ENCODE measurements at regions of chr20 and their contacts with region 1.

Region 1: DNA sequence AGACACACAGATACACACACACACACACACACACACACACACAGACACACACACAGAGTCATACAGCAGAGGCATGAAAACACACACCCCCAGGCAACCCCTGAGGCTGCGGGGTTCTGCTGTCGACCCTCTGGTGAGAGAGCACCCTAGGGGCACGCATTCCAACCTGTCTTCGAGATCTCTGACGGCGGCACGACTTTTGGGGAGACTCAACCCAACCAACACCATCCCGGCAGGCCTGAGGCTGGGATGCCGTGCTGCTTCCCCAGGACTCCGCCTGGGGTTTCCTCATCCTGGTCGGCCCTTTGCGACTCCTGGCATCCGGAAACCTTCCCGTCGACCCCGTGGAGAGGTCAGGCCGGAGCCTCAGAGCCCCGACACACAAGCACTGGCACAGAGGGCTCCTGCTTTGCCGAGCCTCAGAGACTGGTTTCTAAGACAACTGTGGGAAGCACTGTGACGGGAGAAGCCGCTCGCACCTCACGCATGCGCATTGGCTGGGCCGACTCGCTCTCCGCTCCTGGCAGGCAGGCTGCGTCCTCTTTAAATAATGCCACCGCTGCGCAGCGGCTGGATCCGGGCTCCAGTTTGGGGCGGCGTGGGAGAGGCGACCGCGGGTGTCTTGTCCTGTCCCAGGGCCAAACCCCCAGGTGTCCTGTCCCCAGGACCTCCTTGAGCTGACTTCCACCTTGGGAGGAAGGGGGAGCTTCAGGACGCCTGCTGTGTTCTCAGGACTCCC is 168.9 kb upstream of the ZNF337 start:
- DNase-seq: peak; percentile 70
- CTCF ChIP-seq: no peak

Region 2: GRCh38 chr20:25294459-25295385 is 570.8 kb before region 1 on chr20:
- in situ Hi-C with region 1: loop called (anchors 25 kb)
- DNase-seq: peak; percentile 88
- CTCF ChIP-seq: peak; percentile 86

Region 3: DNA sequence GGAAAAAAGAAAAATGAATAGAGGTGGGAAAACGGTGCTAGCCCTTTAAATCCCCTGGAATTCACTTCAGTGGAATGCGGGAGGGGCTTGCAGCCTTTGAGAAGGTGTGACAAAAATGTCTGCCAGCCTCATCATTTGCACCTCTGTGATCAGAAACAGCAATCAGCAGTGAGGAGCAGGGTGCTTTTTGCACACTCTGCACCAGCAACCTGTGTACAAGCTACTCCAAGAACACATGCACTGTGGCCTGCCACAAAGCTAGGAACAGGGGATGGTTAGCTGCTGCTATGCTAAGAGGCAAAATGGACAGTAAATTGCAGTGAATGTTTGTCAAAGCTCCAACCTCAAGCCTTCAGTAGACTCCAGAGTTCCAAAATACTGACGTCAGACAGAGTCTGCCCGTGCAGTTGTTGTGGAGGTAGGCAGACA is 428.4 kb before region 1 on chr20:
- in situ Hi-C with region 1: no loop called
- DNase-seq: no peak
- CTCF ChIP-seq: no peak

Region 4: DNA sequence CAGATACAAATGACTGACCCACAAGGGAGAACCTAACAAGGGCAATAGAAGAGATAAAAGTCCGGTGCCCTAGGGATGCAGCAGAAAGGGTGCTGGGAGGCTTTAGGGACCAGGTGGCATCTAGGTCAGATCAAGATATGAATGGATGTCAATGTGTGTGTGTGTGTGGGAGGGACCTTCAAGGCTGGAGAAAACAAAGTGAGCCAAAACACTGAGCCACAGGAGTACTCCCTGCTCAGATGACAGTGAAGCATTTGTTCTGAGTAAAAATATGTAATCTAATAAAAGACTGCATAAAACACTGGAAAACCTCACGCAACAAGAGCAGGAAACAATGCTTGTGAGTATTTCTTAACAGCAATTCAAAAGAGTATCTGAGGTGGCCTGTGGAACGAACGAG is 197.1 kb before region 1 on chr20:
- in situ Hi-C with region 1: no loop called
- DNase-seq: no peak
- CTCF ChIP-seq: no peak

Region 5: DNA sequence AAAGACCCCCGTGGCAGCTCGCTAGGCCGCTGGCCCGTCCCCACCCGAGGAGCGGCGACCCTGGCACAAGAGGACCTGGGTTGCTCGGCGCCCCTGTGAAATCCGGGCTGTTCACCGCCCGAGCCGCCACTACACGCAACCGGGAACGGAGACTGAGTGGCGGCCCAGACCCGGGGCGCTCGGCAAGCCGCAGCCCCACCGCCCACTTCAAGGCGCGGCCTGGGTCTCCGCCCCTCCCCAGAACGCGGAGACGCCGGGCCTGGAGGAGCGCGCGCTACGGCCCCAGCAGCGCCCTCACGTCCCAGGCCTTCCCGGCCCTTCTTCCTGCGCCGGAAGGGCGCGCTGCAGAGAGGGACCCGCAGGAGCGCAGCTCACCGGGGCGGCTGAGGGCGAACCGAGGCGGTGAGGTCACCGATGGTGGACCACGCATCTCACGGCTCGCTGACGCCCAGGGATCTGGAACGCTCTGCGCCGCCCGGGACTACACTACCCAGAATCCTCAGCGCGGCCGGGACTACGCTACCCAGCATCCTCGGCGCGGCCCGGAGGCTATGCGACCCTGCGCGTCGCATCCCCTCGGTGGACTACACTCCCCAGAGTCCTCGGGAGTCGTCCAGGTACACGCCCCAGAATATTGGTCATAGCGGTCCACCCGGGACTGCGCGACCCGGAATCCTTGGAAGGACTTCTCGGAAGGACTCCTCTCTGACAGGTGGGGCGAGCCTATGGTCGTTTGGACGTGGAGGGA is 169.0 kb before region 1 on chr20 and contains the start of gene ZNF337:
- in situ Hi-C with region 1: loop called (anchors 25 kb)
- DNase-seq: peak; percentile 94
- CTCF ChIP-seq: no peak

Measured in GM13976 (cell line).